ENCODE measurements at regions of chr12 and their contacts with region 1.

Region 1: GRCh38 chr12:50074936-50075807 is 10.0 kb upstream of the SMARCD1 start:
- DNase-seq: peak; percentile 92
- H3K4me3 ChIP-seq: no peak overlapping the region; a peak in 1 of 4 replicates
- H3K27ac ChIP-seq: no peak overlapping the region; a peak in 1 of 4 replicates
- H3K4me1 ChIP-seq: peaks cover 0 to 9% of the 10 kb centered on the region in 2 experiments; a peak in 1 of 4 replicates
- H3K27me3 ChIP-seq: no peaks in the 10 kb centered on the region
- CTCF ChIP-seq: peak; percentile 86
- EP300 ChIP-seq: no peak
- RAD21 ChIP-seq: peak; percentile 92

Region 2: GRCh38 chr12:49866859-49867579 is 208.2 kb before region 1 on chr12:
- CTCF ChIA-PET with region 1: interaction called, 111 read pairs
- POLR2A ChIA-PET with region 1: interaction called, 3 read pairs
- DNase-seq: peak; percentile 89
- H3K4me3 ChIP-seq: no peak overlapping the region; a peak in 1 of 4 replicates
- H3K27ac ChIP-seq: no peak overlapping the region
- H3K4me1 ChIP-seq: peaks cover 32 to 52% of the 10 kb centered on the region in 2 experiments
- H3K27me3 ChIP-seq: no peaks in the 10 kb centered on the region
- CTCF ChIP-seq: peak; percentile 96
- EP300 ChIP-seq: no peak
- RAD21 ChIP-seq: peak; percentile 93

Region 3: DNA sequence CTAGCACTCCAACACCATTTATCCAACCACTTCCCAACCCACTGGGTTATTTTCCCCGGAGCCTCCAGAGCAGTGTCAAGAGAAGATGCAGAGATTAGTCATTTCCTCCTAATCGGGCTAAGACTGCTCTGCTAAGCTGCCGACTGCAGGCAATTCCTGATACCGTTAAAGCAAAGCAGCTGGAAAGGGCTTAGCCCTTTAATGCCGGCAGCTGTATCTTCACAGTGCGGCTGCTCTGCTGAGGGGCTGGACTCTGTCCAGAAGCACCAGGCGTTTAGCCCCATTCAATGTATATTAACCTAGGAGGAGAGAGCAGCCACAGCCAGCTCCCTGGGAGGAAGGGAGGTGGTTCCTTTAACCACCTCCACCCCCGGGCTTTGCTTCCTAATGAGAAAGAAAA is 91.3 kb before region 1 on chr12:
- CTCF ChIA-PET with region 1: interaction called, 38 read pairs
- POLR2A ChIA-PET with region 1: no interaction called
- DNase-seq: peak; percentile 62
- H3K4me3 ChIP-seq: no peak overlapping the region
- H3K27ac ChIP-seq: peak overlapping the region; percentile 70 to 99
- H3K4me1 ChIP-seq: peaks cover 20 to 80% of the 10 kb centered on the region in 2 experiments
- H3K27me3 ChIP-seq: no peaks in the 10 kb centered on the region
- CTCF ChIP-seq: no peak
- EP300 ChIP-seq: peak in 1 of 2 experiments; percentile 87; a peak in 2 of 4 replicates
- RAD21 ChIP-seq: peak; percentile 24

Region 4: DNA sequence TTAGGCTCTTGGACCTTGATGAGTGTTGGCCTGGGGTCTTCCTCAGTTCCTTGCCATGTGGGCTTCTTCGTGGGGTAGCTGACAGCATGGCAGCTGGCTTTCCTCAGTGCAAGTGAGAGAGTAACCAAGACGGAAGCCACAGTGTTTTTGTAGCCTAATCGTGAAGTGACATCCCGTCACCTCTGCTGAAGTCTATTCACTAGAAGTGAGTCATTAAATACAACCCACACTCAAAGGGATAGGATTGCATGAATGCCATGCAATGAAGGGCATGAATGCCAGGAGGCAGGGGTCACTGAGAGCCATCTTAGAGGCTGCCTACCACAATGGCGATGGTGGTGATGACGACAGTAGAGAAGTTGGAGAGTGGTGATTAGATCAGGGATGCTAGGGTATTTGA is 31.3 kb before region 1 on chr12:
- CTCF ChIA-PET with region 1: interaction called, 61 read pairs
- POLR2A ChIA-PET with region 1: no interaction called
- DNase-seq: no peak
- H3K4me3 ChIP-seq: no peak overlapping the region
- H3K27ac ChIP-seq: no peak overlapping the region
- H3K4me1 ChIP-seq: peaks cover 0 to 3% of the 10 kb centered on the region in 2 experiments; a peak in 1 of 4 replicates
- H3K27me3 ChIP-seq: no peaks in the 10 kb centered on the region
- CTCF ChIP-seq: no peak
- EP300 ChIP-seq: no peak
- RAD21 ChIP-seq: no peak

Region 5: DNA sequence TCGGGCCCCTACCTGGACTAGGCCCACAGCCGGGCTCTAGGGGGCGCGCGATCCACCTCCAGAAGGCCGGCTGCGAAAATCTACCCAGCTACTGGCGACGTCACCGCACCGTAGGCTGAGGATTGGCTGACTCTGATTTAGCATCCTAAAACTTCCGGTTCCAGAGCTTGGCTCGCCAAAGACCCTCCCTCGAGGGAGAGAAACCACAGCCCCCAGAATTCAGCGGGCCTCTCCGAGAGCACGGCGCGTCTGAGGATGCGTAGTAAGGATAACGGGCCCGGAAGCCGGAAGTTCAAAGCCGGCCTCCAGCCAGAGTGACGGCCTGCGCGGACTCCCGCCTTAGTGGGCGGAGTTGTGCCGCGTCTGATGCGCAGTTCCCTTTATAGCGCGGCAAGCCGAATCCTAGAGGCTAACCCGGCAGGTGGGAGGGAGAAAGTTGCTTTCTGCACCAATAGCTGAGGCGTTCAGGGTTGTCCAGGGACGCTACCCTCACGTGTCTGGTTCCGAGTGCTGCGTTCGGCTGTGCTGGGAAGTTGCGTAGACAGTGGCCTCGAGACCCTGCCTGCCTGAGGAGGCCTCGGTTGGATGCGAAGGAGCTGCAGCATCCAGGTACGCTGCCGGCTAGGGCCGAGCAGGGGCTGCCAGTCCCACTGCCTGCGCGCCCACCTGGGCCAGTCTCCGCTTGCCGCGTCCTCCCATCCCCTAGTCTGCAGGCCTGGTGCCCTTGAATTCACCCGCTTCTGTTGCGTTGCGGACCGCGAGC is 36.7 kb after region 1 on chr12 and contains the start of gene COX14:
- CTCF ChIA-PET with region 1: interaction called, 10 read pairs
- POLR2A ChIA-PET with region 1: no interaction called
- DNase-seq: peak; percentile 96
- H3K4me3 ChIP-seq: peak within 1 kb of the TSS; percentile 67 to 99
- H3K27ac ChIP-seq: peak within 1 kb of the TSS; percentile 69 to 95
- H3K4me1 ChIP-seq: peaks cover 12 to 18% of the 10 kb centered on the region in 2 experiments; a peak in 2 of 4 replicates
- H3K27me3 ChIP-seq: no peaks in the 10 kb centered on the region
- CTCF ChIP-seq: peak; percentile 98
- EP300 ChIP-seq: no peak
- RAD21 ChIP-seq: peak; percentile 49
- polyA plus RNA-seq, gene COX14: 204 and 218 TPM in 2 replicates

Region 6: DNA sequence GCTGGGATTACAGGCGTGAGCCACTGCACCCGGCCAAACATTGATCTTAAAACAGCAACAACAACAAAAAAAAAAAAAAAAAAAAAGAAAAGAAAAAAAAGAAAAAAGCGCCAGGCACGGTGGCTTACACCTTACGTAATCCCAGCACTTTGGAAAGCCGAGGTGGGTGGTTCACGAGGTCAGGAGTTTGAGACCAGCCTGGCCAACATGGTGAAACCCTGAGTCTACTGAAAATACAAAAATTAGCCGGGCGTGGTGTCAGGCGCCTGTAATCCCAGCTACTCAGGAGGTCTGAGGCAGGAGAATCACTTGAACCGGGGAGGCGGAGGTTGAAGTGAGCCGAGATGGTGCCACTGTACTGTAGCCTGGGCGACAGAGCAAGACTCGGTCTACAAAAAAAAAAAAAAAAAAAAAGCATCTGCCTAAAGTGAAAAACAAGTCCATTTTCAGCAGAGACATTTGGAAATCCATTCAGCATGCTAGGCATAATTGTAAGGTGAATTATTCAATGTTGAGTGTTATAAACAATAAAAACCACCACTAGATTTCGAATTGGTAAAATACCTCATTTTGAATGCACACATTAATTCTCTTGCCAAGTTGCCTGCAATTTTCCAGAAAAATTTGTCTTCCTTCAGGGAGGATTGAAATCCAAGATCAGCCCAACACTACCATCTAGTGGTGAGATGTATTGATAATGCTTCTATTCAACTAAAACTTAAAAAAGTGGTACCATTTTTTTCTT is 100.0 kb after region 1 on chr12:
- CTCF ChIA-PET with region 1: interaction called, 33 read pairs
- POLR2A ChIA-PET with region 1: no interaction called
- DNase-seq: peak; percentile 64
- H3K4me3 ChIP-seq: no peak overlapping the region
- H3K27ac ChIP-seq: peak overlapping the region in 1 of 2 experiments; percentile 41; a peak in 1 of 4 replicates
- H3K4me1 ChIP-seq: no peaks in the 10 kb centered on the region
- H3K27me3 ChIP-seq: no peaks in the 10 kb centered on the region
- CTCF ChIP-seq: peak; percentile 74
- EP300 ChIP-seq: no peak
- RAD21 ChIP-seq: peak; percentile 86

Measured in SK-N-SH (cell line).